ENCODE measurements at regions of chr1 and their contacts with region 1.

Region 1: DNA sequence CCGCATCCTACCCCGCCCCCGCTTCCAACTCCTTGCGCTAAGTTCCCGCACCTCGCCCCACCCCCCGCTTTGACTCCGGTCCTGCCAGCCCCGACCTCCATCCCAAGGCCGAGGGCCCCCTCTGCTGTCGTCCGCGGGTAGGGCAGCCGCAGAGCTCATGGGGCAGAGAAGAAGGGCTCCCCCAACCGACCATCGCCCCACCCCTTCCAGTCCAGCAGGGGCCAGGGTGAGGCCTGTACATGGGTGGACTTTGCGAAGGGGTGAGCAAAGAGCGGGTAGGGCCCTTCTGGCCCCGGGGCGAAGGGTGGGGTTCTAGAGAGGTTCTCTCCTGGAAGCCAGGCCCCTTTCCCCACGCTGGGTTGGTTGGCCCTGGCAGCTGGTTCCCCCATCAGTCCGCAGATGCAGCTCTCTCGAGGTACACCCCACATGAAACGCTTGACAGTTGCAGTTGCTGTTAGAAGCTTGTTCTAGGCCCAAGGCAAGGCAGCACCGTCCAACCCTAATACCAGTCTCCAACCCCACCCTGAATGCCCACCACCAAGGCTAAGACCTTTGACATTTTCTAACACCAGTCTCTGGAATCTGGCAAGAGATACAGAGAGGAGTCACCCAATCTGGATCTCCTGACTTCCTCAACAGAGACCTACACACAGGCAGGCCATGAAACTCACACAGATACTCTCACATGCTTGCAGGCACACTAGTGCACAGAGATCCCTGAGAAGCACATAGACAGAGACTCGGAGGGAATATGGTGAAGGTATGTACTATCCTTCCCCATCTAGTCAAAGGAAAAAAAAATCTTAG is 25.3 kb upstream of the ADGRB2 start:
- DNase-seq: peak; percentile 92
- H3K4me3 Mint-ChIP-seq: peak overlapping the region; percentile 85
- H3K27ac Mint-ChIP-seq: no peak overlapping the region
- H3K4me1 Mint-ChIP-seq: peaks cover 7% of the 10 kb centered on the region
- H3K27me3 Mint-ChIP-seq: peaks cover 13% of the 10 kb centered on the region

Region 2: DNA sequence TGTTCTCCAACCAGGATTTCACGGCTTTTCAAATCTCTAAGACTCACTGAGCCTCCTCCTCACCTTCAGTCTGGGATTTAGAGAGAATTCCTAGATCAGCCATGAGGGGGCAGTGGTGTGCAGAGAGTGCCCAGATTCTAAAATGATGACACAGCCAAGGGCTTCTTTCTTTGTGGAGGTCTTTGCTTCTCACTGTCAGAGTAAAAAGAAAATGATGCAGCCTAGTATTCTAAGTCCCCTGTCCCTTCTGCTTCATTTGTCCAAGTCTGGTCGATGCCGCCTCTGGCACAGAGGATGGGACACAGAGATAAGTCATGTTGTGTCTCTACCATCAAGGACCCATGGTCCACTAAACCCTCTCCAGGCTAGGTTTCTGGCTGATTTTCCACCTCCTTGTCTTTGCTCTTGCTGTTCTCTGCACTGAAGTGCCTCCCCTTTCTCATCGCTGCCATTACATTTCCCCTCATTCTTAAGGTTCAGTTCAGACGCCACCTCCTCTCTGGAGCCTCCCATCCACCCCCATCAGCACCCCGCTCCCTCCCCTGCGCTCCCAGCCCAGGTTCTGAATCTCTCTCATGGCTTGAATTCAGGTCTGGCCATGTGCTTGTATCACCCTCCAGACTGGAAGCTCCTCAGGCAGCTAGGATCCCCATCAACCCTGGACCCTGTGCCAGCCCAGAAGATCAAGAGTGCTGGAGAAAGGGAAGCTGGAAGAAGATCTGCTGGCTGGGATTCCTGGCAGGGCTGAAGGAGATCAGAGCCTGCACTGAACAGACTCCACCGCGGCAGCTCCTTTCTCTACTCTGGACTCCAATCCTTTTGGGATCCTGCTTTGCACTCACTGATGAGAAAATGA is 225.1 kb before region 1 on chr1:
- intact Hi-C with region 1: loop called (anchors 5 kb)
- DNase-seq: peak; percentile 32
- H3K4me3 Mint-ChIP-seq: no peak overlapping the region
- H3K27ac Mint-ChIP-seq: no peak overlapping the region
- H3K4me1 Mint-ChIP-seq: no peaks in the 10 kb centered on the region
- H3K27me3 Mint-ChIP-seq: peaks cover 21% of the 10 kb centered on the region

Region 3: GRCh38 chr1:31663622-31664452 is 125.6 kb before region 1 on chr1:
- intact Hi-C with region 1: loop called (anchors 1 kb)
- DNase-seq: peak; percentile 26
- H3K4me3 Mint-ChIP-seq: no peak overlapping the region
- H3K27ac Mint-ChIP-seq: no peak overlapping the region
- H3K4me1 Mint-ChIP-seq: no peaks in the 10 kb centered on the region
- H3K27me3 Mint-ChIP-seq: peaks cover 1% of the 10 kb centered on the region

Region 4: DNA sequence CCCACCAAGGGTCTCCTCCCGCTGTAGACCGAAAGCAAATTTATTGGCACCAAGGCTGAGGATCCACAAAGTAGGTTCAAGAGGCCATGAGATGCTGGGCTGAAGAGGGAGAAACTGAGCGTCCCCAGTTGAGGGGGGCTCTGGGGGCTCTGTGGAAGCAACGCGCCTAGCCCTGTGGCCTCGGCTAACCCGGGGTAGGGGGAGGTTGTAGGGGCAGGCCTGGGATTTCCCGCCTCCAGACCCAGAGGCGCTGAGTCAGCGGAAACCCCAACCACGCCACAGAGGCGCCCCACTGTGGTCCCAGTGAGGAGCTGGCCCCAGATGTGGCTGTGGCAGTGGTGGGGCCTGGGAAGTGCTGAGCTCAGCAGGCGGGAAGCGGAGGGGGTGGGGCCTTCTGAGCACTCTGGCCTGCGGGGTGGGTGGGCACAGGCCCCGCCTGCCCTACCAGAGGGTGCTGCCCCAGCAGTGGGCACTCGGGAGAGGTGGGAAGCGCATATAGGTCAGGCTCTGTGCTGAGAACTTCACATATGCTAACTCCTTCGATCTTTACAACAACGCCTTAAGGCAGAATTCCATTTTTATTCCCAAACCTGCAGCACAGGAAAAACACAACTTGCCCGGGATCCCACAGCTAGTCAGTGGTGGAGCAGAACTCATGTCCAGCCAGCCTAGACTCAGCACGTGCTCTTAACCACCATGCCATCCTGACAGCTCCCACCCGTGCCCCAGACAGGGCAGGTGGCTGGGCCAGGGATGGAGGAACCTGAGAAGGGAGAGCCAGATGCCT is 84.2 kb before region 1 on chr1:
- intact Hi-C with region 1: loop called (anchors 2 kb)
- DNase-seq: peak; percentile 49
- H3K4me3 Mint-ChIP-seq: no peak overlapping the region
- H3K27ac Mint-ChIP-seq: no peak overlapping the region
- H3K4me1 Mint-ChIP-seq: peaks cover 29% of the 10 kb centered on the region
- H3K27me3 Mint-ChIP-seq: peaks cover 20% of the 10 kb centered on the region

Region 5: GRCh38 chr1:31762726-31763670 is 26.5 kb before region 1 on chr1:
- intact Hi-C with region 1: loop called (anchors 1 kb)
- DNase-seq: peak; percentile 54
- H3K4me3 Mint-ChIP-seq: peak overlapping the region; percentile 81
- H3K27ac Mint-ChIP-seq: peak overlapping the region; percentile 8
- H3K4me1 Mint-ChIP-seq: peaks cover 13% of the 10 kb centered on the region
- H3K27me3 Mint-ChIP-seq: peaks cover 55% of the 10 kb centered on the region

Region 6: GRCh38 chr1:31769720-31770390 is 19.6 kb before region 1 on chr1:
- intact Hi-C with region 1: loop called (anchors 2 kb)
- DNase-seq: no peak
- H3K4me3 Mint-ChIP-seq: no peak overlapping the region
- H3K27ac Mint-ChIP-seq: peak overlapping the region; percentile 74
- H3K4me1 Mint-ChIP-seq: peaks cover 58% of the 10 kb centered on the region
- H3K27me3 Mint-ChIP-seq: peaks cover 44% of the 10 kb centered on the region

Region 7: GRCh38 chr1:31815752-31816500 is 26.5 kb after region 1 on chr1 and contains the start of gene SPOCD1:
- intact Hi-C with region 1: no loop called
- DNase-seq: peak; percentile 77
- H3K4me3 Mint-ChIP-seq: no peak within 1 kb of the TSS
- H3K27ac Mint-ChIP-seq: no peak within 1 kb of the TSS
- H3K4me1 Mint-ChIP-seq: peaks cover 7% of the 10 kb centered on the region
- H3K27me3 Mint-ChIP-seq: no peaks in the 10 kb centered on the region
- total RNA-seq, gene SPOCD1: 0.07 TPM in 1 of 2 replicates, not detected in the other

Measured in activated T-helper 2 cell treated with anti-CD3 and anti-CD28 coated beads, Interferon-gamma antibody, Interleukin-2, Interleukin-4, amounts not matched to agents 10 μg/mL and 5 μg/mL and 100 μg/mL, durations not matched to agents 14 hours and 24 hours and 36 hours (primary cell).